AG04450 (cell line): ENCODE measurements at regions of chr6 and their contacts with region 1.

Region 1: GRCh38 chr6:33717934-33718455 is 6.5 kb upstream of the UQCC2 start:
- DNase-seq: no peak
- H3K4me3 ChIP-seq: no peak overlapping the region
- H3K27ac ChIP-seq: no peak overlapping the region
- H3K27me3 ChIP-seq: peaks cover 31% of the 10 kb centered on the region
- CTCF ChIP-seq: no peak

Region 2: DNA sequence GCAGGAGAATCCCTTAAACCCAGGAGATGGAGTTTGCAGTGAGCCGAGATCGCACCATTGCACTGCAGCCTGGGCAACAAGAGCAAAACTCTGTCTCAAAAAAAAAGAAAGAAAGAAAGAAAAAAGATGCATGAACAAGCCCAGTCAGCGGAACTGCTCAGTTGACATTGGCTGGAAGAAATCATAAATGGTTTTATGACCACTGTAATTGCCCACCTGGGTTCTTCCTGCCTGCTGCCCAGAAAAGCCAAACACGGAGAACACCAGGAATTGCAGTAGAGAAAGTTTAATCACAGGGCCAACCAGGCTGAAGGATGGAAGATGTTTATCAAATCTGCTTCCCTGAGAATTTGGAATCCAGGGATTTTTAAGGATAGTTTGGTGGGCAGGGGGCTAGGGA is 160.6 kb before region 1 on chr6:
- CTCF ChIA-PET with region 1: no interaction called
- POLR2A ChIA-PET with region 1: no interaction called
- DNase-seq: no peak
- H3K4me3 ChIP-seq: no peak overlapping the region
- H3K27ac ChIP-seq: no peak overlapping the region
- H3K27me3 ChIP-seq: no peaks in the 10 kb centered on the region
- CTCF ChIP-seq: no peak

Region 3: DNA sequence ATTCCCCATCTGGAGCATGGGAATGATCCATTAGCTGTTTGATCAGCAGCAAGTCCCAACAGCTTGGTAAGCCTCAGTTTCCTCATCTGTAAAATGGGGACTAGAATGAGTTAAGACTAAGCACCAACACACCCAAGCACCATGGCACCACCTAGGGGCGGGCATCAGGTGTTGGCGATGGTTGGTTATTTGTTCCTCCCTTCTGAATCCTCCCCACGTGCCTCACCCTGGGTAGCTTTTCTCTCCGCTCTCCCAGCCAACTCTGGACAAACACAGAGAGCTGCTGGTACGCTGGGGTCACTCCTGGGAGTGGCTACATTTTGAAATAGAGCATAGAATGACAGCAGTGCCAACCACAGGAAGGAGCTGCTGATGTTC is 110.2 kb before region 1 on chr6:
- CTCF ChIA-PET with region 1: no interaction called
- POLR2A ChIA-PET with region 1: interaction called, 12 read pairs
- DNase-seq: no peak
- H3K4me3 ChIP-seq: no peak overlapping the region
- H3K27ac ChIP-seq: no peak overlapping the region
- H3K27me3 ChIP-seq: no peaks in the 10 kb centered on the region
- CTCF ChIP-seq: 0 out of 2 replicates have a peak, but pooled peaks have one; percentile 2